Activated CD8-positive, alpha-beta memory T cell treated with anti-CD3 and anti-CD28 coated beads, Interleukin-2, amount 10 ng/mL, durations not matched to agents 7 days and 5 days (primary cell): ENCODE measurements at regions of chr2 and their contacts with region 1.

Region 1: GRCh38 chr2:219278655-219279516 is at the start of gene DNAJB2:
- DNase-seq: peak; percentile 99
- ATAC-seq: peak; percentile 90
- H3K4me3 Mint-ChIP-seq: peak within 1 kb of the TSS; percentile 94
- H3K27ac Mint-ChIP-seq: peak within 1 kb of the TSS; percentile 96
- H3K4me1 Mint-ChIP-seq: peaks cover 32% of the 10 kb centered on the region
- H3K27me3 Mint-ChIP-seq: no peaks in the 10 kb centered on the region
- total RNA-seq, gene DNAJB2: 48.2 to 49.0 TPM

Region 2: GRCh38 chr2:219171231-219171651 is 107.6 kb before region 1 on chr2:
- CTCF ChIA-PET with region 1: interaction called, 14 read pairs
- DNase-seq: no peak
- ATAC-seq: peak; percentile 45
- H3K4me3 Mint-ChIP-seq: no peak overlapping the region
- H3K27ac Mint-ChIP-seq: no peak overlapping the region
- H3K4me1 Mint-ChIP-seq: peaks cover 36% of the 10 kb centered on the region
- H3K27me3 Mint-ChIP-seq: no peaks in the 10 kb centered on the region

Region 3: GRCh38 chr2:219229305-219230058 is 49.4 kb before region 1 on chr2 and contains the starts of genes ANKZF1 and ATG9A:
- CTCF ChIA-PET with region 1: interaction called, 12 read pairs
- DNase-seq: peak; percentile 100
- ATAC-seq: peak; percentile 98
- H3K4me3 Mint-ChIP-seq: peak within 1 kb of the TSS; percentile 98
- H3K27ac Mint-ChIP-seq: peak within 1 kb of the TSS; percentile 95
- H3K4me1 Mint-ChIP-seq: peaks cover 65% of the 10 kb centered on the region
- H3K27me3 Mint-ChIP-seq: no peaks in the 10 kb centered on the region
- total RNA-seq, gene ANKZF1: 89.4 to 105 TPM
- total RNA-seq, gene ATG9A: 56.6 to 60.7 TPM

Region 4: DNA sequence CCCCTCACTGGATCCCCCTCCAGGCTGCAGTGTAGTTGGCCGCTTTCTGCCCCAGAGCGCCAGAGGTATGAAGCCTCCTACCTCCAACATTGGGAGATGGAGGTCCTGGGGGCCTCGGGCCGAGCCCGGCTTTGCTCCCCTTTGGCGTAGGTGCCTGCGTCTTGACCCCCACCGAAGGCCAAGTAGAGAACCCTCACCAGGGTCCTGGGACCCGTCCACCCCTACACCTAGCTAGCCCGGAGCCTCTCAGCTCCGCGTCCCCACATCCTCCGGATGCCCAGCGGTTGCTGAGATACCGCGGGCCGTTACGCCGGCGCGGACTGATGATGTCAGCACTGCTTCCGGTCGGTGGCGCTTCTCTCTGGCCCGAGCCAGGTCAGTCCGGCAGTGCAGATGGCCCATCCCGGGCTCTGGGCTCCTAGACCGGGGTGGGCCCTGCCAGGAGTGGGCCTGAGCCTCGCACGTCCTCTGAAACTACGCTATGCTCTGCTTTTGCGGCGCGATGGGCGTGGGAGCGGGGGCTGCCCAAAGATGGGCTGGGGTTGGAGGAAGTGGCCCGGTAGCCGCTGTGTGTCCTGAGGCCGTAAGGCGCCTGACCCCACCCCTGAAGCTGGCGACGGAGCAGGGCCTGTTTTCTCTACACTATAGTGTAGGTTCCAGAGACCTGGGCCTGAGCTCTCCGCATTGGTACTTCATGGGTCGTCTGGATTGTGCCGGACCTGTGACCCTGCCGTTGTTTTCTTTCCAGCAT is 33.6 kb before region 1 on chr2 and contains the starts of genes GLB1L and STK16:
- CTCF ChIA-PET with region 1: interaction called, 23 read pairs
- DNase-seq: peak; percentile 94
- ATAC-seq: peak; percentile 75
- H3K4me3 Mint-ChIP-seq: peak within 1 kb of the TSS; percentile 99
- H3K27ac Mint-ChIP-seq: peak within 1 kb of the TSS; percentile 100
- H3K4me1 Mint-ChIP-seq: peaks cover 61% of the 10 kb centered on the region
- H3K27me3 Mint-ChIP-seq: no peaks in the 10 kb centered on the region
- total RNA-seq, gene GLB1L: 4.3 to 4.9 TPM
- total RNA-seq, gene STK16: 37.3 to 41.7 TPM

Region 5: GRCh38 chr2:219253753-219254590 is 24.9 kb before region 1 on chr2 and contains the start of gene TUBA4A:
- CTCF ChIA-PET with region 1: interaction called, 71 read pairs
- DNase-seq: peak; percentile 92
- ATAC-seq: peak; percentile 76
- H3K4me3 Mint-ChIP-seq: peak within 1 kb of the TSS; percentile 99
- H3K27ac Mint-ChIP-seq: peak within 1 kb of the TSS; percentile 97
- H3K4me1 Mint-ChIP-seq: peaks cover 44% of the 10 kb centered on the region
- H3K27me3 Mint-ChIP-seq: peaks cover 3% of the 10 kb centered on the region
- total RNA-seq, gene TUBA4A: 244 to 337 TPM

Region 6: DNA sequence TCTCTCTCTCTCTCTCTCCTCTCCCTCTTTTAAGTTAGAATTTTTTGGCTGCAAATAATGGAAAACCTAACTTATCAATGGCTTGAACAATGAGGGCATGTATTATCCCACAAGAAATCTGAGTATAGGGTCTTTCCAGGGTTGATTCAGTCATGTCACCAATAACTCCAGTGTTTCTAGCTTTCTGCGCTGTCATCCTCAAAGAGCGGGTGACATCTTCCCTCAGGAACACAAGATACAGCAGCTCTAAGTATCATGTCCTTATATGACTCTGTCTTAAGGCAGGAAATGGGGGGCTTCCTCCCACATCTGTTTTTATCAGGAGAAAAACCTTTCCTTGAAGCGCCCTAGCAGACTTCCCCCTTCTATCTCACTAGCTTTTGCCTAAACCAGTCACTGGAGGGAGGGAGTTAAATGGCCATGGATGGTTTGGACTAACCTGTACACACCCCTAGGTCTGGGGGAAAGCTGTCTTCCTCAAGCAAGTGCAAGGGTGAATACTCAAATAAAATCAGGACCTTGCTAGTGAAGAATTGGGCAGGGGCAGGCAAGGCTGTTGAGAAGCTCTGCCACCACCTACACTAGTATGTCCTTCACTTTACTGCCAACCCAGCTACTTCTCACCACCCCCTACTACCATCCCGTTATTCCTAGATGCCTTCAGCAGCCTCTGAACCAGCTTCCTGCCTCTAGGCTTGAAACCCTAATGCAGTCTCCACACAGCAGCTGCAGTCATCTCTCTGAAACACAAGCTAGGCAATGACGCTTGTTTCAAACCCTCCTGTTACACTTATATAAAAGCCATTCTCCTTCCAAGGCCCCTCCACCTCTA is 17.6 kb before region 1 on chr2:
- CTCF ChIA-PET with region 1: interaction called, 71 read pairs
- DNase-seq: no peak
- ATAC-seq: no peak
- H3K4me3 Mint-ChIP-seq: no peak overlapping the region
- H3K27ac Mint-ChIP-seq: no peak overlapping the region
- H3K4me1 Mint-ChIP-seq: no peaks in the 10 kb centered on the region
- H3K27me3 Mint-ChIP-seq: peaks cover 17% of the 10 kb centered on the region

Region 7: DNA sequence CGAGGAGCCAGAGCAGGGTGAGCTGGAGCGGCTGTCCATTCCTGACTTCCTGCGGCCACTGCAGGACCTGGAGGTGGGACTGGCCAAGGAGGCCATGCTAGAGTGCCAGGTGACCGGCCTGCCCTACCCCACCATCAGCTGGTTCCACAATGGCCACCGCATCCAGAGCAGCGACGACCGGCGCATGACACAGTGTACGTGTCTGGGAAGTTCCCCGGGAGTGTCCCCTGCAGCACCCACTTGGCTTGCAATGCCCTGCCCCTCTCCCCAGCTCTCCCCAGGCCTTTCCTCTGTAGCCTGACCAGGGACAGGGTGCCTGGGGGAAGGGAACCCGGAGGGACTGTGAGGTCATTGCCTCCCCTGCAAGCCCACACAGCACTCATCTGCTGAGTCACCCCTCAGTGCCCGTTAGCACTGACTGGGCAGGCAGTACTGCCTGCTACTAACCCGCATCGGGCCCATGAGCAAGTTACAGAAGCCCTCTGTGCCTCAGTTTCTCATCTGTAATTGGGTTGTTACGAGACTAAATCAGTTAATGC is 190.4 kb after region 1 on chr2:
- CTCF ChIA-PET with region 1: no interaction called
- DNase-seq: no peak
- ATAC-seq: no peak
- H3K4me3 Mint-ChIP-seq: no peak overlapping the region
- H3K27ac Mint-ChIP-seq: no peak overlapping the region
- H3K4me1 Mint-ChIP-seq: no peaks in the 10 kb centered on the region
- H3K27me3 Mint-ChIP-seq: no peaks in the 10 kb centered on the region

Region 8: DNA sequence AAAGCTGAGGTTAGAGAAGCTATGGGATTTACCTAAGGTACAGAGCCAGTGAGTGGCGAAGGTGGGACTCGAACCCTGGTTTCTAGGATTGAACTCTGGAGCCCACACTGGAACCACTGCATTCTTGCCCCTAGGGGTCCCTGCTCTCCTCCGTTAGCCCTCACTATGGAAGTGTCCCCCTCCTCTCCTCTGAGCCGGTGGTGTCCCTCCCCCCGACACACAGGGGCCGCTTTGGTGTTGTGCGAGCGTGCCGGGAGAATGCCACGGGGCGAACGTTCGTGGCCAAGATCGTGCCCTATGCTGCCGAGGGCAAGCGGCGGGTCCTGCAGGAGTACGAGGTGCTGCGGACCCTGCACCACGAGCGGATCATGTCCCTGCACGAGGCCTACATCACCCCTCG is 211.3 kb after region 1 on chr2:
- CTCF ChIA-PET with region 1: no interaction called
- DNase-seq: no peak
- ATAC-seq: no peak
- H3K4me3 Mint-ChIP-seq: no peak overlapping the region
- H3K27ac Mint-ChIP-seq: no peak overlapping the region
- H3K4me1 Mint-ChIP-seq: no peaks in the 10 kb centered on the region
- H3K27me3 Mint-ChIP-seq: peaks cover 40% of the 10 kb centered on the region